Heart right ventricle (tissue), 16 donors: ENCODE measurements at regions of chr17 and their contacts with region 1.

Region 1: GRCh38 chr17:716238-716637 is 1.6 kb upstream of the VPS53 start:
- DNase-seq: no peak
- ATAC-seq: no peak
- H3K4me3 ChIP-seq: peak overlapping the region in 5 of 10 donors; percentile 79 to 99 (median 95)
- H3K27ac ChIP-seq: no peak overlapping the region
- H3K4me1 ChIP-seq: peaks cover 0 to 40% (median 26%) of the 10 kb centered on the region in 9 donors
- H3K27me3 ChIP-seq: no peaks in the 10 kb centered on the region
- CTCF ChIP-seq: no peak

Region 2: GRCh38 chr17:628089-628941 is 87.9 kb before region 1 on chr17:
- intact Hi-C with region 1: no loop called
- DNase-seq: no peak
- ATAC-seq: no peak
- H3K4me3 ChIP-seq: no peak overlapping the region
- H3K27ac ChIP-seq: peak overlapping the region in 1 of 10 donors; percentile 49
- H3K4me1 ChIP-seq: peaks cover 4 to 45% (median 13%) of the 10 kb centered on the region in 9 donors
- H3K27me3 ChIP-seq: no peaks in the 10 kb centered on the region
- CTCF ChIP-seq: no peak

Region 3: GRCh38 chr17:640436-640835 is 75.8 kb before region 1 on chr17:
- intact Hi-C with region 1: no loop called
- DNase-seq: no peak
- ATAC-seq: no peak
- H3K4me3 ChIP-seq: no peak overlapping the region
- H3K27ac ChIP-seq: no peak overlapping the region
- H3K4me1 ChIP-seq: peaks cover 0 to 3% (median 0%) of the 10 kb centered on the region in 9 donors
- H3K27me3 ChIP-seq: no peaks in the 10 kb centered on the region
- CTCF ChIP-seq: no peak

Region 4: DNA sequence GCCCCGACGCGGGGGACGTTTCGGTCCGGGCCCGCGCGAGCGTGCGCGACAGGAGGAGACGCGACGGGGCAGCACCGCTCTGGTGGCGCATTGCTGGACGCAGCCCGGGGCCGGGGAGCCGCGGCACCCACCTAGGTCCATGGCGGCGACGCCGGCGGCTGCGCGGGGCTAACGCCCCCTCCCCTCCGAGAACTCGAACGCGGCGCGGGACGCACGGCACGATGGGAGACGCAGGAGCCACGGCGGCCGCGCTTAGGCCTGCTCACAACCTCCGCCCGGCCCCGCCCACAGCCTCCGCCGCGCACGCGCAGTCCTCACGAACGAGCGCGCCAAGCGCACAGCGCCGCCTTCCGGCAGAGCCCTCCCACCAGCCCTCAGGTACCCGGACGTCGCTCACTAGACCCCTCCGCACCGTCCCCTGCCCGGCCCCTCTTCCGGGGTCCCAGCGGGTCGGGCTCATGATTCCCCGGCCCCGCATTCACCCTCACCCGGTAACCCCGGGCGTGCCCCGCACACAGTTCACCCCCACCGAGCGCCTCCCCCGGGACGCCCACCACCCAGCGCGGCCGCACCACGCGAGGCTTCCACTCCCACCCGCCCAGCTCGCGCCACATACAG is 35.9 kb after region 1 on chr17 and contains the start of gene GEMIN4:
- intact Hi-C with region 1: loop called in 1 of 10 experiments (anchors 2 kb)
- DNase-seq: peak; percentile 91 to 96
- ATAC-seq: peak; percentile 91 to 96 (median 93)
- H3K4me3 ChIP-seq: peak within 1 kb of the TSS; percentile 71 to 98 (median 82)
- H3K27ac ChIP-seq: peak within 1 kb of the TSS; percentile 13 to 89 (median 84)
- H3K4me1 ChIP-seq: peaks cover 3 to 39% (median 22%) of the 10 kb centered on the region in 9 donors
- H3K27me3 ChIP-seq: no peaks in the 10 kb centered on the region
- CTCF ChIP-seq: peak in 8 of 9 donors; percentile 91 to 99 (median 97)
- total RNA-seq, gene GEMIN4: 9.3 to 14.9 (median 11.3) TPM